ENCODE measurements at regions of chr15 and their contacts with region 1.

Region 1: GRCh38 chr15:84600851-84601838 is at the start of gene ZSCAN2:
- H3K4me3 Mint-ChIP-seq: peak within 1 kb of the TSS; percentile 97
- H3K27ac Mint-ChIP-seq: peak within 1 kb of the TSS; percentile 91
- H3K4me1 Mint-ChIP-seq: peaks cover 67% of the 10 kb centered on the region
- H3K27me3 Mint-ChIP-seq: no peaks in the 10 kb centered on the region

Region 2: DNA sequence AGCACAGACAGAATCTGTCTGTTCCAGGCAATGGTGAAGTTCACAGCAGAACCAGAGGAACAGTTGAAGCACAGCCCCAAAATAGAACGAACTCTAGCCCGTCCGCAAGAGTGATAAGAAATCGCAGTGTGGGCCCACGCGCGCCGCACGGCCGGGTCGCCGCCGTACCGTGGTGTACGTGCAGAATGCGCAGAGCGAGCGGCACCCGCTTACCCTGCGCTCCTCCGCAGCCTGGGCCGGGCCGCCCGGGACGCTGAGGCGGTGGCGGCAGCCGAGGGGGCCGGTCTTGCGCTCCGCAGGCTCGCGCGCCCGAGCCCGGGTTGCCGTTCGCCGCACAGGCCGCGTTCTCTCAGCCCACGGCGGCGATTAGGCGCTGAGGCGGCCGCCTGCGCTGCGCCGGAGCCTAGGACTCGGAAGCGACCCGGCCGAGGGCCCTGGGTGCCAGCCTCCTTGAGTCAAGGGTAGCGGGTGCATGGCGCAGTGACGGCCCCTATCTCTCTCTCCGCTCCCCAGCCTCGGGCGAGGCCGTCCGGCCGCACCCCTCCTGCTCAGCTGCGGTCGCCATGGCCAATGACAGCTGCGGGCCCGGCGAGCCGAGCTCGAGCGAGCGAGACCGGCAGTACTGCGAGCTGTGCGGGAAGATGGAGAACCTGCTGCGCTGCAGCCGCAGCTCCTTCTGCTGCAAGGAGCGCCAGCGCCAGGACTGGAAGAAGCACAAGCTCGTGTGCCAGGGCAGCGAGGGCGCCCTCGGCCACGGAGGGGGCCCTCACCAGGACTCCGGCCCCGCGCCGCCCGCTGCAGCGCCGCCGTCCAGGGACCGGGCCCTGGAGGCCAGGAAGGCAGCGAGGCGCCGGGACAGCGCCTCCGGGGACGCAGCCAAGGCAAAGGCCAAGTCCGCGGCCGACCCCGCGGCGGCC is 32.4 kb after region 1 on chr15:
- intact Hi-C with region 1: loop called (anchors 1 kb)
- H3K4me3 Mint-ChIP-seq: peak overlapping the region; percentile 86
- H3K27ac Mint-ChIP-seq: peak overlapping the region; percentile 83
- H3K4me1 Mint-ChIP-seq: peaks cover 46% of the 10 kb centered on the region
- H3K27me3 Mint-ChIP-seq: no peaks in the 10 kb centered on the region

Region 3: GRCh38 chr15:84773716-84774115 is 172.6 kb after region 1 on chr15:
- intact Hi-C with region 1: loop called (anchors 10 kb)
- H3K4me3 Mint-ChIP-seq: no peak overlapping the region
- H3K27ac Mint-ChIP-seq: peak overlapping the region; percentile 80
- H3K4me1 Mint-ChIP-seq: peaks cover 55% of the 10 kb centered on the region
- H3K27me3 Mint-ChIP-seq: no peaks in the 10 kb centered on the region